MCF 10A (cell line): ENCODE measurements at regions of chr12 and their contacts with region 1.

Region 1: DNA sequence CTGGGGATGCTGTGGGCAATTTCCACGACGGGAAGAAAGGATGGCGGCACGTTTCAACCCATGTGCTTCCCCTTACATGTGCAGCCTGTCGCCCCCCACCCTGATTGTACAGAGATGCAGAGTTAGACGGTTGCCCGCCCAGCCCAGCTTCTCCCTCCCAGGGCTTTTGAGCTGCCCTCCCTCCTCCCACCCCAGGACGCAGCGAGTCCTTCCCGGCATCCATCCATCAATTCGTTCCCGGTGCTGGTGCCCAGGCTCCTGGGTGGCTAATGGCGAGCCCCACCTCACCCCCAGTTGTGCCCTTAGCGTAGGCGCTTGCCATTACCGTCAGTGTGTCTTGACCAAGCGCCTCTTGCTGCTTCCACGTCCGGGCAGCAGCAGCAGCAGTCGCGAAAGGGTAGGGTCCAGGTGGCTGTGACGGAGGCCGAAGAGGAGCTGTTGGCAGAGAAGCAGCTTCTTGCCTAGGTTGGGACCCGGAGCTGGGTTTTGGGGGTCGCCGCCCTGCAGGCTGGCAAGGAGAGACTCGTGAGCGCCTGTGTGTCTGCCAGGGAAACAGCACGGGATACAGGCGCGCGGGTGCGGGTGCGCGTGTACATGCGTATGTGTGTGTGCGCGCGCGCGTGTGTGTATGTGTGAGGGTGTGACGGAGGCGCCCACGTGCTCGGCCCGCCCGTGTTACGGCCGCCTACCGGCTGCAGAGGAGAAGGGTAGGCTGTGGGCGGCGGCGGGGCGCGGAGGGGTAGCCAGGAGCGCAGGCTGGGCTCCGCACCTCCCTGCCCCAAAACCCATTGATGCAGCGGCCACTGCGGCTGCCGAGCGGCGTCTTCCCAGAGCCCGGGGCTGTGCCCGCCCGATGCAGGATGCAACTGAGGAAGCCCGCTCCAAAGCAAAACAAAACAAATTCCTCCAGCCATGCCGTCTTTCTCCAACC is at the start of gene SLC6A15:
- DNase-seq: peak; percentile 88
- H3K4me3 Mint-ChIP-seq: peak within 1 kb of the TSS; percentile 92
- H3K27ac Mint-ChIP-seq: peak within 1 kb of the TSS; percentile 92
- H3K4me1 Mint-ChIP-seq: peaks cover 17% of the 10 kb centered on the region
- H3K27me3 Mint-ChIP-seq: no peaks in the 10 kb centered on the region
- CTCF ChIP-seq: peak; percentile 73
- total RNA-seq, gene SLC6A15: 94.0 and 96.3 TPM in 2 replicates

Region 2: DNA sequence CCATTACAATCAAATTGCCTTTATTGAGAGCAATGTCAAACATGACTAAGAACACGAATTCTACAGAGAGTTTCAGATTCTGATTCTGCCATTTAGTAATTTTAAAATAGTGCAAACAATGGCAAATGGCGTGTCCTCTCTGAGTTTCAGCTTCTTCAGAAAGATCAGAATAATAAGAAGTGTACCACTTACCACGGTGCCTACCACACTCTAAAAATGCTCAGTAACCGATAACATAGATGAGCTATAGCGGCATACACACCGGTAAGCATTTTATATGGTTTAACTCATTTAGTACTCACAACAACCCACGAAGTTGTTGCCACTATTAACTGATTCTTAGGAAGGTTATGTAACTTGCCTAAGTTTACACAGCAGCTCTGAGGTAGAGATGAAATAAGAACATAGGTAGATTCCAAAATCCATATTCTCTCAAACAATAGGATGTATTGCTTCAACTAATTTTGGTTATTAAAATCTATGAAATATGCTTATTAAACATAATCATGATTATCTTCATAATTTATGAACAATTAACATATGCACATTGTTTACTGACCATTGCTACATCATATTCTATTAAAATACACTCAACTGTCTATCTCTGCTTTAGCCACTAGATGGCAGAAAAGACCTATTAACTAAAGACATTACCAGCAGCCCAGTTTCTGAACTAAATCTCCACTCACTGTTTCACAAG is 38.2 kb before region 1 on chr12:
- CTCF ChIA-PET with region 1: interaction called, 10 read pairs
- POLR2A ChIA-PET with region 1: interaction called, 36 read pairs
- intact Hi-C with region 1: loop called (anchors 2 kb)
- DNase-seq: peak; percentile 69
- H3K4me3 Mint-ChIP-seq: no peak overlapping the region
- H3K27ac Mint-ChIP-seq: no peak overlapping the region
- H3K4me1 Mint-ChIP-seq: no peaks in the 10 kb centered on the region
- H3K27me3 Mint-ChIP-seq: no peaks in the 10 kb centered on the region
- CTCF ChIP-seq: peak; percentile 63

Region 3: DNA sequence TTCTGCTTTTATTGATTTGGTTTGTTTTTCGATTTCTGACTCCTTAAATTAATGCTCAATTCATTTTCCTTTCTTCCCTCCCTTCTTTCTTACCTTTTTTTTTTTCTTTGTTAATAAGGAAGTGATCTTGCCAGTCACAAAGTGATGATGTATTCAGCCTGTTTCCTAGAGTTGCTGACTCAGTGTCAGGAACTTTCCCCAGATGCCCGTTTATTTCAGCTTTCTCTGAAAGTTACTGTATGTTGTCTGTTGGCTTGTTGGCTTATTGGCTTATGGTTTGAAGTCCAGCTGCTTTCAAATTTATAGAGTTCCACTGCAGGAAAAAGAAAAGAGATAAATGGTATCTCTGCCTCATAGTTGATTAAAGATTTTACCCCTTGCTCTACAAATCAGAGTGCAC is 12.5 kb after region 1 on chr12:
- CTCF ChIA-PET with region 1: interaction called, 5 read pairs
- POLR2A ChIA-PET with region 1: interaction called, 91 read pairs
- intact Hi-C with region 1: no loop called
- DNase-seq: peak; percentile 32
- H3K4me3 Mint-ChIP-seq: no peak overlapping the region
- H3K27ac Mint-ChIP-seq: no peak overlapping the region
- H3K4me1 Mint-ChIP-seq: peaks cover 18% of the 10 kb centered on the region
- H3K27me3 Mint-ChIP-seq: no peaks in the 10 kb centered on the region
- CTCF ChIP-seq: no peak

Region 4: GRCh38 chr12:85016423-85016822 is 104.0 kb after region 1 on chr12:
- CTCF ChIA-PET with region 1: interaction called, 4 read pairs
- POLR2A ChIA-PET with region 1: interaction called, 26 read pairs
- intact Hi-C with region 1: loop called (anchors 1 kb)
- DNase-seq: peak; percentile 95
- H3K4me3 Mint-ChIP-seq: peak overlapping the region; percentile 21
- H3K27ac Mint-ChIP-seq: peak overlapping the region; percentile 23
- H3K4me1 Mint-ChIP-seq: peaks cover 12% of the 10 kb centered on the region
- H3K27me3 Mint-ChIP-seq: no peaks in the 10 kb centered on the region
- CTCF ChIP-seq: no peak

Region 5: DNA sequence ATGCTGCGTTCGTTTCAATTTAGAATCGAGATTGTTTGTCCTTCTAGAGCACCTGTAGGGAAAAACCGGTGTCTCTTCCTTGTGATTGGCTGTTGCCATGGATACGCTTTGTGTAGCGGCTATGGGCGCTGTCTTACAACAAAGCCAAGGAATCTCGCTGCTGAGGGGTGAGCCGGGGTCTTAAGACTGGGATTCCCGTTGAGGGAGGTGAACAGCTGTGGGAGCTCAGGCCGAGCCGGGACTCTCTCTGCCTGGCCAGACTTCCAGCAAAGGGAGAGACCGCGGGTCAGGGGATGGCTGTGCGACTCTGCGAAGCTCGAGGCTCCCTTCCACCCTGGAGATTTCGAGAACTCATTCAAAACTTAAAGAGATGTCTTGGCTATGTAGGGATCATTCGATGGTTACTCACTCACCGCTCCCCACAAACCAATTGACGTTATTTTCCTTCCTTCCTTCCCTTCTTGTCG is 123.8 kb after region 1 on chr12 and contains the starts of genes LRRIQ1 and TSPAN19:
- CTCF ChIA-PET with region 1: interaction called, 6 read pairs
- POLR2A ChIA-PET with region 1: interaction called, 30 read pairs
- intact Hi-C with region 1: no loop called
- DNase-seq: peak; percentile 93
- H3K4me3 Mint-ChIP-seq: peak within 1 kb of the TSS; percentile 92
- H3K27ac Mint-ChIP-seq: peak within 1 kb of the TSS; percentile 88
- H3K4me1 Mint-ChIP-seq: no peaks in the 10 kb centered on the region
- H3K27me3 Mint-ChIP-seq: peaks cover 11% of the 10 kb centered on the region
- CTCF ChIP-seq: no peak
- total RNA-seq, gene LRRIQ1: 0.70 and 1.5 TPM in 2 replicates
- total RNA-seq, gene TSPAN19: 0.63 and 1.1 TPM in 2 replicates